CD14-positive monocyte (primary cell): ENCODE measurements at regions of chr19 and their contacts with region 1.

Region 1: DNA sequence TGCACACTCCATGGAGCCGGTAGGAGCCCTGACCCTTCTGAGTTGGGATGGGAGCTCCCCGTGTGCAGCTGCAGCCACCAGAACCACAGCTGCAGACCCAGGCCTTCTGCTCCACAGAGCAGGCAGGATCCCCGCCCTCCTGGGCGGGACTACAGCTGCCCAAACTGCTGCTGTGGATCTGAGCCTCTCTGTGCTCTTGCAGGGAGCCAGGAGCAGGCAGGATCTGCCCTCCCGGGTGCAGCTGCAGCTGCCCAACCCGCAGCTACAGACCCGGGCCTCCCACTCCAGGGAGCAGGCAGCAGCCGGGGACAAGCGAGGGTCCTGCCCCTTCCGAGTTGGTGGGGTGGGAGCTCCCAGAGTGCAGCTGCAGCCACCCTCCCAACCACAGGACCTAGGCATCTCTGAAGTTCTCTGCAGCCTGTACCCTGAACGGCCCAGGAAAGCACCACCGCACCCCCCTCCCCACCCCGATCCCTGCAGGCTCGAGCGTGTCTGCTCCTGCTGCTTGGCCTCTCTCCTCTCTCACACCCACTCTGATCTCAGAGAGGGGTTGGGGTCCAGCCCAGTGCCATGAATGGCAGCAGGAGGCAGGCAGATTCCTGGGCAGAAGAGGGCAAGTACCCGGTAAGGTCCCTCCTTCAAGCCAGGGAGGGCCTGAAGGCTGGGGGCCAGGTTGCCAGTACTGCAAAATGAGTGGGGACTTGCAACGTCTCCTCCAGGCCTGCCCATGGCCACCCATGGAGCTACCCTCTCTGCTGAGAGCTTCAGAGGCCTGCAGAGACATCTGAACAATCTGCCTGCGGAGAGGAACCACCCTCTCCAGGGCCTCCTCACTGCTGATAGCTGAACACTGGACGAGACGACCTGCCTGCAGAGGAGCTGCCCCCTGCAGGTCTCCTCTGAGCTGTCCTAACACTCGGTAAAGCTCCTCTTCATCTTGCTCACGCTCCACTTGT is 16.4 kb upstream of the EMP3 start:
- DNase-seq: no peak
- H3K4me3 ChIP-seq: no peak overlapping the region
- H3K4me3 Mint-ChIP-seq: no peak overlapping the region
- H3K27ac ChIP-seq: no peak overlapping the region
- H3K27ac Mint-ChIP-seq: peak overlapping the region in 1 of 7 donors; percentile 72
- H3K4me1 ChIP-seq: no peaks in the 10 kb centered on the region
- H3K4me1 Mint-ChIP-seq: no peaks in the 10 kb centered on the region
- H3K27me3 ChIP-seq: no peaks in the 10 kb centered on the region
- H3K27me3 Mint-ChIP-seq: peaks cover 0 to 5% (median 2%) of the 10 kb centered on the region in 3 donors
- CTCF ChIP-seq: no peak

Region 2: GRCh38 chr19:48340995-48341394 is 32.1 kb after region 1 on chr19:
- intact Hi-C with region 1: loop called in 1 of 2 experiments (anchors 5 kb)
- DNase-seq: no peak
- H3K4me3 ChIP-seq: no peak overlapping the region
- H3K4me3 Mint-ChIP-seq: no peak overlapping the region
- H3K27ac ChIP-seq: no peak overlapping the region
- H3K27ac Mint-ChIP-seq: peak overlapping the region in 2 of 7 donors; percentile 8 to 77
- H3K4me1 ChIP-seq: peaks cover 3 to 12% of the 10 kb centered on the region in 2 donors
- H3K4me1 Mint-ChIP-seq: peaks cover 7% of the 10 kb centered on the region
- H3K27me3 ChIP-seq: no peaks in the 10 kb centered on the region
- H3K27me3 Mint-ChIP-seq: peaks cover 0 to 3% (median 0%) of the 10 kb centered on the region in 3 donors
- CTCF ChIP-seq: no peak

Region 3: GRCh38 chr19:48351341-48351752 is 42.4 kb after region 1 on chr19:
- intact Hi-C with region 1: loop called in 1 of 2 experiments (anchors 5 kb)
- DNase-seq: peak; percentile 60 to 69 (median 60)
- H3K4me3 ChIP-seq: no peak overlapping the region
- H3K4me3 Mint-ChIP-seq: no peak overlapping the region
- H3K27ac ChIP-seq: no peak overlapping the region
- H3K27ac Mint-ChIP-seq: peak overlapping the region in 2 of 7 donors; percentile 26 to 71
- H3K4me1 ChIP-seq: no peaks in the 10 kb centered on the region
- H3K4me1 Mint-ChIP-seq: no peaks in the 10 kb centered on the region
- H3K27me3 ChIP-seq: no peaks in the 10 kb centered on the region
- H3K27me3 Mint-ChIP-seq: peaks cover 0 to 3% (median 0%) of the 10 kb centered on the region in 3 donors
- CTCF ChIP-seq: peak; percentile 83